B cell (primary cell): ENCODE measurements at regions of chr3 and their contacts with region 1.

Region 1: GRCh38 chr3:39189959-39190269 is 2.5 kb downstream of the XIRP1 start:
- DNase-seq: peak; percentile 81
- ATAC-seq: peak; percentile 86
- H3K4me3 ChIP-seq: no peak overlapping the region
- H3K4me3 Mint-ChIP-seq: no peak overlapping the region
- H3K27ac ChIP-seq: no peak overlapping the region
- H3K27ac Mint-ChIP-seq: peak overlapping the region; percentile 47
- H3K4me1 ChIP-seq: peaks cover 8% of the 10 kb centered on the region in 2 donors
- H3K4me1 Mint-ChIP-seq: peaks cover 10% of the 10 kb centered on the region
- H3K27me3 ChIP-seq: peaks cover 0 to 10% (median 0%) of the 10 kb centered on the region in 4 experiments
- H3K27me3 Mint-ChIP-seq: peaks cover 3% of the 10 kb centered on the region
- CTCF ChIP-seq: peak; percentile 80

Region 2: GRCh38 chr3:39101022-39101689 is 88.8 kb before region 1 on chr3:
- CTCF ChIA-PET with region 1: interaction called, 25 read pairs
- POLR2A ChIA-PET with region 1: no interaction called
- intact Hi-C with region 1: no loop called
- DNase-seq: peak; percentile 71
- ATAC-seq: peak; percentile 85
- H3K4me3 ChIP-seq: no peak overlapping the region
- H3K4me3 Mint-ChIP-seq: no peak overlapping the region
- H3K27ac ChIP-seq: peak overlapping the region in 1 of 2 donors; percentile 9
- H3K27ac Mint-ChIP-seq: peak overlapping the region; percentile 71
- H3K4me1 ChIP-seq: peaks cover 11 to 31% of the 10 kb centered on the region in 2 donors
- H3K4me1 Mint-ChIP-seq: peaks cover 46% of the 10 kb centered on the region
- H3K27me3 ChIP-seq: no peaks in the 10 kb centered on the region
- H3K27me3 Mint-ChIP-seq: no peaks in the 10 kb centered on the region
- CTCF ChIP-seq: peak; percentile 71

Region 3: GRCh38 chr3:39126532-39127071 is 63.3 kb before region 1 on chr3:
- CTCF ChIA-PET with region 1: interaction called, 24 read pairs
- POLR2A ChIA-PET with region 1: no interaction called
- intact Hi-C with region 1: no loop called
- DNase-seq: peak; percentile 50
- ATAC-seq: peak; percentile 37
- H3K4me3 ChIP-seq: no peak overlapping the region
- H3K4me3 Mint-ChIP-seq: peak overlapping the region; percentile 11
- H3K27ac ChIP-seq: no peak overlapping the region
- H3K27ac Mint-ChIP-seq: peak overlapping the region; percentile 62
- H3K4me1 ChIP-seq: peaks cover 47 to 50% of the 10 kb centered on the region in 2 donors
- H3K4me1 Mint-ChIP-seq: peaks cover 62% of the 10 kb centered on the region
- H3K27me3 ChIP-seq: no peaks in the 10 kb centered on the region
- H3K27me3 Mint-ChIP-seq: no peaks in the 10 kb centered on the region
- CTCF ChIP-seq: no peak

Region 4: GRCh38 chr3:39166134-39166731 is 23.7 kb before region 1 on chr3:
- CTCF ChIA-PET with region 1: interaction called, 12 read pairs
- POLR2A ChIA-PET with region 1: no interaction called
- intact Hi-C with region 1: no loop called
- DNase-seq: peak; percentile 26
- ATAC-seq: peak; percentile 54
- H3K4me3 ChIP-seq: no peak overlapping the region
- H3K4me3 Mint-ChIP-seq: no peak overlapping the region
- H3K27ac ChIP-seq: no peak overlapping the region
- H3K27ac Mint-ChIP-seq: no peak overlapping the region
- H3K4me1 ChIP-seq: no peaks in the 10 kb centered on the region
- H3K4me1 Mint-ChIP-seq: no peaks in the 10 kb centered on the region
- H3K27me3 ChIP-seq: no peaks in the 10 kb centered on the region
- H3K27me3 Mint-ChIP-seq: no peaks in the 10 kb centered on the region
- CTCF ChIP-seq: no peak

Region 5: DNA sequence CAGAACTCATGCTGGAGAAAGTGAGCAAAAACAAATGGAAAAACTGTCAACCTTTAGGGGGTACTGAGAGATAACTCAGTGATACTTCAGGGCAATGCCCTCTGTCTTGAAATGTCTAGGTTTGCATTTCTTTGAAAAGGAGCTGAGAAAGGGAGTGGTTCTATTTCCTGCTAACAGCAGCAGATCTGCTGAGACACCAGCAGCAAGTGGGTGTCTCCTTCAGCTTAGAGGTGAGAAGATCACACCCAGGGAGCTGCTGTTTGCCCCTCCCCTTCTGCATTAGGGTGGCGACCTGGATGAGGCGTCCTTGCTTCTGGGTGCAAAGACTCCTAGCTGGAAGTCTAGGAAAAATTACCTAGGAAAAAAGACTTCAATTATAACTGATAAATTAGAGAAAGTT is 44.8 kb after region 1 on chr3:
- CTCF ChIA-PET with region 1: interaction called, 10 read pairs
- POLR2A ChIA-PET with region 1: no interaction called
- intact Hi-C with region 1: no loop called
- DNase-seq: no peak
- ATAC-seq: no peak
- H3K4me3 ChIP-seq: no peak overlapping the region
- H3K4me3 Mint-ChIP-seq: peak overlapping the region; percentile 14
- H3K27ac ChIP-seq: no peak overlapping the region
- H3K27ac Mint-ChIP-seq: no peak overlapping the region
- H3K4me1 ChIP-seq: peaks cover 23 to 25% of the 10 kb centered on the region in 2 donors
- H3K4me1 Mint-ChIP-seq: peaks cover 31% of the 10 kb centered on the region
- H3K27me3 ChIP-seq: no peaks in the 10 kb centered on the region
- H3K27me3 Mint-ChIP-seq: peaks cover 14% of the 10 kb centered on the region
- CTCF ChIP-seq: no peak

Region 6: DNA sequence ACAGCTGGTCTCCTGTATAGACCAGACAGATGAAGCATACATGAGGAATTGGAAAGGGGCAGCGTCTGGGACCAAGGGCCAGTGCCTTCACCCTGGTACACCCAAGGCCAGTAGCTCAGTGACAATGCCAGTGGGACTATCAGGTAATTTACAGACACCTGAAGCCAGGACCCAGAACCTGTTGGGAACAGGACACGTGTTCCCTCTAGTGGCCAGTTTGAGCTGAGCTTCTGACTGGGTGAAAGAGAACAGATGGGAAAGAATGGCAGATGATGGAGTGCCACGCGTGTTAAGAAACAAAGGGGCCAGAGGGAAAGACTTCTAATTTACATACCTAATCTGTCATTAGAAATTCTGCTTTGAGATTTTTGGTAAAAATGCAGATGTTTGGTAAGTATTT is 188.2 kb after region 1 on chr3:
- CTCF ChIA-PET with region 1: interaction called, 8 read pairs
- POLR2A ChIA-PET with region 1: no interaction called
- intact Hi-C with region 1: loop called (anchors 2 kb)
- DNase-seq: peak; percentile 63
- ATAC-seq: peak; percentile 60
- H3K4me3 ChIP-seq: no peak overlapping the region
- H3K4me3 Mint-ChIP-seq: no peak overlapping the region
- H3K27ac ChIP-seq: no peak overlapping the region
- H3K27ac Mint-ChIP-seq: no peak overlapping the region
- H3K4me1 ChIP-seq: peaks cover 6 to 7% of the 10 kb centered on the region in 2 donors
- H3K4me1 Mint-ChIP-seq: peaks cover 12% of the 10 kb centered on the region
- H3K27me3 ChIP-seq: peaks cover 0 to 2% (median 0%) of the 10 kb centered on the region in 4 experiments
- H3K27me3 Mint-ChIP-seq: no peaks in the 10 kb centered on the region
- CTCF ChIP-seq: peak; percentile 78

Region 7: GRCh38 chr3:40398346-40398745 is 1208.4 kb after region 1 on chr3:
- CTCF ChIA-PET with region 1: no interaction called
- POLR2A ChIA-PET with region 1: no interaction called
- intact Hi-C with region 1: no loop called
- DNase-seq: no peak
- ATAC-seq: no peak
- H3K4me3 ChIP-seq: no peak overlapping the region
- H3K4me3 Mint-ChIP-seq: no peak overlapping the region
- H3K27ac ChIP-seq: no peak overlapping the region
- H3K27ac Mint-ChIP-seq: no peak overlapping the region
- H3K4me1 ChIP-seq: no peaks in the 10 kb centered on the region
- H3K4me1 Mint-ChIP-seq: no peaks in the 10 kb centered on the region
- H3K27me3 ChIP-seq: no peaks in the 10 kb centered on the region
- H3K27me3 Mint-ChIP-seq: peaks cover 7% of the 10 kb centered on the region
- CTCF ChIP-seq: no peak